ENCODE measurements at regions of chr10 and their contacts with region 1.

Region 1: GRCh38 chr10:58177362-58177947 is 90.2 kb downstream of the IPMK start:
- DNase-seq: peak in 4 of 5 donors; percentile 5 to 14 (median 10)
- H3K4me3 ChIP-seq: no peak overlapping the region
- H3K4me3 Mint-ChIP-seq: no peak overlapping the region
- H3K27ac ChIP-seq: no peak overlapping the region
- H3K27ac Mint-ChIP-seq: no peak overlapping the region
- H3K4me1 ChIP-seq: no peaks in the 10 kb centered on the region
- H3K4me1 Mint-ChIP-seq: no peaks in the 10 kb centered on the region
- H3K27me3 ChIP-seq: no peaks in the 10 kb centered on the region
- H3K27me3 Mint-ChIP-seq: peaks cover 2 to 5% of the 10 kb centered on the region in 2 donors

Region 2: DNA sequence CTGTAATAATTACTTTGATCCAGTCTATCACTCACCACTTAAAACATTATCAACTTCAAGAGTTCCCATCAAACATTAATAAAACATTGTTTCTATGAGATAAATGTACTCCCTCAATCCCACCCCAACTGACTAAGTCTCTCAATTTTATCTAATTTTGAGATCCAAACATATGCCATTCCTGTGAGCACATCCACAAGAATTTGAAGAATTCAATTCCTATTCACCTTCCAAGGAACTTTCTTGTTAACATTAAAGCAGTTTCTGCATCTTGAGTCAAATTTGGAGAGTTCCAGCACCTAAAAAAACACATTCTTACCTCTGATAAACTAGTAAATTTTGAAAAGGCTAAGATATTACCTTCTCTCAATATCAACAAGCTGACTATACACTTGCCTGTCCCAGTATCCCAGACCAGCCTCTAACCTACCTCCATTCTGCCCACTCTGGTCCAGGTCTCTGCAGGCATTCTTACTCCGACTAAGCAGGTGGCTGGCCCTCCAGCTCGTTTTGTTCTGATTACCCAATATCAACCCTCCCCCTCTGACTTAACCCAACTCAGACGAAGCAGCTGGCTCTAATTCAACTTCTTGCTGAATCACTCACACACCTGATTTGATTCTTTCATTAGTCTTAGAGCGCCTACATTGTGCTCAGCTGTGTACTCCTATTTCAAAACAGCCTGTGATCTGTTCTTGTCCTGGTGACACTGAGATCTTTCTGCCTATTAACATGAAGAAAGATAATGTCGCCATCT is 185.0 kb before region 1 on chr10:
- CTCF ChIA-PET with region 1: no interaction called
- POLR2A ChIA-PET with region 1: no interaction called
- intact Hi-C with region 1: no loop called
- DNase-seq: no peak
- H3K4me3 ChIP-seq: no peak overlapping the region
- H3K4me3 Mint-ChIP-seq: no peak overlapping the region
- H3K27ac ChIP-seq: no peak overlapping the region
- H3K27ac Mint-ChIP-seq: no peak overlapping the region
- H3K4me1 ChIP-seq: no peaks in the 10 kb centered on the region
- H3K4me1 Mint-ChIP-seq: no peaks in the 10 kb centered on the region
- H3K27me3 ChIP-seq: no peaks in the 10 kb centered on the region
- H3K27me3 Mint-ChIP-seq: no peaks in the 10 kb centered on the region

Region 3: GRCh38 chr10:58143944-58144343 is 33.5 kb before region 1 on chr10:
- CTCF ChIA-PET with region 1: no interaction called
- POLR2A ChIA-PET with region 1: no interaction called
- intact Hi-C with region 1: no loop called
- DNase-seq: no peak
- H3K4me3 ChIP-seq: no peak overlapping the region
- H3K4me3 Mint-ChIP-seq: no peak overlapping the region
- H3K27ac ChIP-seq: no peak overlapping the region
- H3K27ac Mint-ChIP-seq: peak overlapping the region in 1 of 7 donors; percentile 33
- H3K4me1 ChIP-seq: no peaks in the 10 kb centered on the region
- H3K4me1 Mint-ChIP-seq: peaks cover 0 to 7% (median 2%) of the 10 kb centered on the region in 4 donors
- H3K27me3 ChIP-seq: no peaks in the 10 kb centered on the region
- H3K27me3 Mint-ChIP-seq: peaks cover 0 to 3% of the 10 kb centered on the region in 2 donors

Region 4: GRCh38 chr10:58291538-58292174 is 114.2 kb after region 1 on chr10:
- CTCF ChIA-PET with region 1: interaction called, 223 read pairs
- POLR2A ChIA-PET with region 1: no interaction called
- intact Hi-C with region 1: loop called (anchors 1 kb)
- DNase-seq: peak; percentile 40 to 51 (median 47)
- H3K4me3 ChIP-seq: no peak overlapping the region
- H3K4me3 Mint-ChIP-seq: peak overlapping the region in 1 of 8 donors; percentile 23
- H3K27ac ChIP-seq: no peak overlapping the region
- H3K27ac Mint-ChIP-seq: peak overlapping the region in 1 of 7 donors; percentile 0
- H3K4me1 ChIP-seq: no peaks in the 10 kb centered on the region
- H3K4me1 Mint-ChIP-seq: peaks cover 0 to 5% (median 2%) of the 10 kb centered on the region in 4 donors
- H3K27me3 ChIP-seq: no peaks in the 10 kb centered on the region
- H3K27me3 Mint-ChIP-seq: no peaks in the 10 kb centered on the region

Region 5: DNA sequence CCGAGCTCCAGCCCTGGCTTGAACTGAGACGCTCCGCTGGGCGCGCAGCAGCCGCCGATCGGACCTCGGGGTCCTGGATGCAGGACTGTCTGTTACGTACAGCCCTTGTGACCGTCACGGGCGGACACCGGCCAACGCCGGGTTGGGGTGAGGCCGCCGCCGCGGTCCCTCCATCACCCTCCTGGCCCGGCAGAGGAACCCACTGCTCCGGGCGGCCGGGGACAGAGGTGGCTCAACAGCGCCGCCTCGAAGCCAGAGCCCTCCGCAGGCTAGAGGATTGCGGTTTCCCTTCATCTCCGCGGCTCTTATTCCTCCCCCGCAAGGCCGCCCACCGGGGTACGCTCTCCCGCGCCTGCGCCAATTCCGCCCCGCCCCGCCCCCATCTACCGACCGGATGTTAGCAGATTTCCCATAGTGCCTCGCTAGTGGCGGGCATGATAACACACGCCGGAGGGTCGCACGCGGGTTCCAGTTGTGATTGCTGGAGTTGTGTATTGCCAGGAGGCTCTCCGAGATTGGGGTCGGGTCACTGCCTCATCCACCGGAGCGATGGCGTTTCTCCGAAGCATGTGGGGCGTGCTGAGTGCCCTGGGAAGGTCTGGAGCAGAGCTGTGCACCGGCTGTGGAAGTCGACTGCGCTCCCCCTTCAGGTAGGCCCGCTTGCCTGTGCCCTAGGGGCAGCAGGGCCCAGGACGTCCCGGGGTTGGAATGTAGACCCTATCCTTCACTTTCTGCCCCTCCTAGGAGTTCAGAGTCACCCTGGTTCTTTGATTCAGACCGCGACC is 207.7 kb after region 1 on chr10 and contains the start of gene TFAM:
- CTCF ChIA-PET with region 1: no interaction called
- POLR2A ChIA-PET with region 1: no interaction called
- intact Hi-C with region 1: loop called (anchors 2 kb)
- DNase-seq: peak; percentile 92 to 95 (median 93)
- H3K4me3 ChIP-seq: peak within 1 kb of the TSS; percentile 89 to 96
- H3K4me3 Mint-ChIP-seq: peak within 1 kb of the TSS; percentile 90 to 99 (median 98)
- H3K27ac ChIP-seq: peak within 1 kb of the TSS; percentile 74
- H3K27ac Mint-ChIP-seq: peak within 1 kb of the TSS; percentile 92 to 98 (median 96)
- H3K4me1 ChIP-seq: peaks cover 48% of the 10 kb centered on the region
- H3K4me1 Mint-ChIP-seq: peaks cover 28 to 57% (median 39%) of the 10 kb centered on the region in 4 donors
- H3K27me3 ChIP-seq: no peaks in the 10 kb centered on the region
- H3K27me3 Mint-ChIP-seq: peaks cover 0 to 1% of the 10 kb centered on the region in 2 donors
- total RNA-seq, gene TFAM: 45.6 to 52.1 TPM

Measured in CD4-positive, alpha-beta memory T cell (primary cell).